ENCODE measurements at regions of chr1 and their contacts with region 1.

Region 1: GRCh38 chr1:223133824-223134435 is 9.1 kb downstream of the TLR5 start:
- DNase-seq: no peak
- H3K4me3 ChIP-seq: peak overlapping the region; percentile 46
- CTCF ChIP-seq: peak; percentile 90

Region 2: GRCh38 chr1:222792744-222793143 is 341.2 kb before region 1 on chr1:
- CTCF ChIA-PET with region 1: interaction called, 10 read pairs
- POLR2A ChIA-PET with region 1: no interaction called
- DNase-seq: no peak
- H3K4me3 ChIP-seq: no peak overlapping the region
- CTCF ChIP-seq: peak; percentile 20

Region 3: GRCh38 chr1:223041473-223041872 is 92.5 kb before region 1 on chr1:
- CTCF ChIA-PET with region 1: no interaction called
- POLR2A ChIA-PET with region 1: no interaction called
- DNase-seq: no peak
- H3K4me3 ChIP-seq: no peak overlapping the region
- CTCF ChIP-seq: no peak

Region 4: DNA sequence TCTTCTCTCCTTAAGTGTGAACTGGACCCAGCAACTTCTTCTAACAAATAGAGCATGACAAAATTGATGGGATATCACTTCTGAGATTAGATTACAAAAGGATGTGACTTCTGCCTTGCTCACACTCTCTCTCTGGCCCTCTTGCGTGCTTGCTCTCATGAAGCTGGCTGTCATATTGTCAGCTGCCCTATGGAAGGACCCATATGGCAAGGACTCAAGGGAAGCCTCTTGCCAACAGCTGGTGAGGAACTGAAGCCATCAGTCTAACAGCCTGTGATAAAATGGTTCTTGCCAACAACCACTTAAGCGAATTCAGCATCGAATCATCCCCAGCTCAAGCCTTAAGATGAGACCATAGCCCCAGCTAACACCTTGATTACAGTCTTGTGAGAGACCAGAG is 13.9 kb after region 1 on chr1:
- CTCF ChIA-PET with region 1: interaction called, 296 read pairs
- POLR2A ChIA-PET with region 1: no interaction called
- DNase-seq: no peak
- H3K4me3 ChIP-seq: no peak overlapping the region
- CTCF ChIP-seq: no peak

Region 5: DNA sequence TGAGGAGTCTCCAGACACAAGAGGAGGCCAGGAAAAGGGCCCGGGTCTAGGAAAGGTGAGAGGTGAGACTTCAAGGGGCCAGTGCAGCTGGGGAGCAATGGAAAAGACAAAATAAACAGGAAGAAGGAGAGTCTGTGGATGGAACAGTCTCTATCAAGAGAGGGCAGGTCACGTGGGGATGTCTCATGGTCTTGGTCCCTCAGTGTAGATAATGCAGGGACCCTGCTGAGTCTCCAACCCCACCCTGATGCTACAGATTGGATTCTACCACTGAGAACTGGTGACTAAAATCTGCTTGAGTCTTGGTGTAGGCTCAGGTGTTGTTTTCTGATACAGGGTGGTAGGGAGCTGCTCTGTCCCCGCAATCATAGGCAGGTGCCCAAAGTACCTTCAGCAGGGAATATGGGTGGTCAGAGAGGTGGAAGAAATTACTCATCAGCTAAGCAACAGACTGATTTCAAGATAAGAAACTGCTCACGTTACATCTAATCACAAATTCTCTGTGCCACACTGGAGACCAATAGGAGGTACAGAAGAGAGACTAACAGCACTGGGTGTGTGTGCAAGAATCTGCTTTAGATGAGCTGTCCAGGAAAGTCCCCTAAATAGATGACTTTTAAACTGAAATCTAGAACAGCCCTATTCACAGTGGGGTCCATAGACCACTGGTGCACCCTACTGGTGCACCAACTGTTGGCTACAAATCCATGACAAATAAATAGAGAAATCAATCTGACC is 110.6 kb after region 1 on chr1:
- CTCF ChIA-PET with region 1: interaction called, 51 read pairs
- POLR2A ChIA-PET with region 1: no interaction called
- DNase-seq: no peak
- H3K4me3 ChIP-seq: no peak overlapping the region
- CTCF ChIP-seq: peak; percentile 4

Region 6: GRCh38 chr1:223628233-223629125 is 494.5 kb after region 1 on chr1:
- CTCF ChIA-PET with region 1: interaction called, 22 read pairs
- POLR2A ChIA-PET with region 1: no interaction called
- DNase-seq: no peak
- H3K4me3 ChIP-seq: no peak overlapping the region
- CTCF ChIP-seq: peak; percentile 61

Measured in AG04449 (cell line).